SK-N-SH (cell line): ENCODE measurements at regions of chr7 and their contacts with region 1.

Region 1: DNA sequence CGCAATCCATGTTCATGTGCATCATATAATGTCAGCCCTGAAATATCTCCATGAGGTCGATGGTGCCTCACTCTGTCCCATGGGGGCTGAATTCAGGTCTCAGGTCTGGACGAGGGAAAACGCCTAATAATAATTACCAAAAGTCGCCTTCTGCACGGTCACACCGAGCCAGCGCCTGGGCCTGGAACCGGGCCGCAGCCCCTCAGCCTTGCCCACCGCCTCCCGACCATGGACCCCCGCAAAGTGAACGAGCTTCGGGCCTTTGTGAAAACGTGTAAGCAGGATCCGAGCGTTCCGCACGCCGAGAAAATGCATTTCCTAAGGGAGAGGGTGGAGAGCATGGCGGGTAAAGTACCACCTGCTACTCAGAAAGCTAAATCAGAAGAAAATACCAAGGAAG is 18.8 kb upstream of the KLRG2 start:
- DNase-seq: no peak
- H3K4me3 ChIP-seq: no peak overlapping the region
- H3K27ac ChIP-seq: no peak overlapping the region
- H3K4me1 ChIP-seq: no peaks in the 10 kb centered on the region
- H3K27me3 ChIP-seq: no peaks in the 10 kb centered on the region
- CTCF ChIP-seq: no peak
- EP300 ChIP-seq: no peak
- RAD21 ChIP-seq: no peak

Region 2: GRCh38 chr7:139382439-139382838 is 119.8 kb before region 1 on chr7:
- CTCF ChIA-PET with region 1: no interaction called
- POLR2A ChIA-PET with region 1: no interaction called
- DNase-seq: no peak
- H3K4me3 ChIP-seq: no peak overlapping the region
- H3K27ac ChIP-seq: no peak overlapping the region
- H3K4me1 ChIP-seq: no peaks in the 10 kb centered on the region
- H3K27me3 ChIP-seq: no peaks in the 10 kb centered on the region
- CTCF ChIP-seq: no peak
- EP300 ChIP-seq: no peak
- RAD21 ChIP-seq: no peak

Region 3: DNA sequence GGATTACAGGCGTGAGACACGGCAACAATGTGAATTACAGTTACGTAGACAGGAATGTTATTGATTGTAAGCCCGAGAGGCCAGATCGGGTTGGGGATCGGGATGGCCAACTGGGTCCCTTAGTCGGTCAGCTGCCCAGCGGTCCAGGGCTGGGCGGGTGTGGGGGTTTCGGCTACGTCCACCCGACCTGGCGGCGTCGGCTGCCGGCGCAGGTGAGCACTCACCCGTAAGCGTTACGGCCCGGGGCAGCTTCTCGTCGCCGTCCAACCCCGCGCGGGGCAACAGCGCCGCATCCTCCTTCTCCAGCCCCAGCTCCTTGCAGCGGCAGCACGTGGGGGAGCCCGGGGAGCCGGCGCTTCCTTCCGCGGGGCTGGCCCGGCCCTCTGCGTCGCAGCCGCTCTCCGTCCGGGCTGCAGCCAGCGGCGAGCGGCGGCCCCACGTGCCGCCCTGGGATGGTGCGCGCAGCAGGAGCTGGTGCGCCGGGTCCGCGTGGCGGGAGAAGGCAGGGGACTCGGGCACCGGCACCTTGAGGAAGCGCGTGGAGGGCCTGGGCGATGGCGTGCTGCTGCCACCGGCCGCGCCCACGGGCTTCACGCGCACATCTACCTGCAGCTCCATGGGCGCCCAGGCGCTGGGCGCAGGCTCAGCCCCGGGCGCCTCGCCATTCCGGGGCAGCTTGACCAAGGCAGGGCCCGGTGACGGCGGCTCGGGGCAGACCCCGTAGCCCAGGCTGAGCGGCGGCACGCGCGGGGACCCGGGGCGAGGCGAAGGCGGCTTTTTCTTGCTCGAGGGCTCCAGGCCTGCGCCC is 19.4 kb before region 1 on chr7:
- CTCF ChIA-PET with region 1: interaction called, 25 read pairs
- POLR2A ChIA-PET with region 1: no interaction called
- DNase-seq: peak; percentile 89
- H3K4me3 ChIP-seq: peak overlapping the region; percentile 30 to 41
- H3K27ac ChIP-seq: no peak overlapping the region
- H3K4me1 ChIP-seq: peaks cover 0 to 21% of the 10 kb centered on the region in 2 experiments; a peak in 1 of 4 replicates
- H3K27me3 ChIP-seq: peaks cover 61% of the 10 kb centered on the region
- CTCF ChIP-seq: no peak
- EP300 ChIP-seq: no peak
- RAD21 ChIP-seq: no peak

Region 4: GRCh38 chr7:139557857-139558581 is 55.8 kb after region 1 on chr7:
- CTCF ChIA-PET with region 1: interaction called, 22 read pairs
- POLR2A ChIA-PET with region 1: no interaction called
- DNase-seq: no peak
- H3K4me3 ChIP-seq: no peak overlapping the region
- H3K27ac ChIP-seq: no peak overlapping the region
- H3K4me1 ChIP-seq: no peaks in the 10 kb centered on the region
- H3K27me3 ChIP-seq: no peaks in the 10 kb centered on the region
- CTCF ChIP-seq: no peak
- EP300 ChIP-seq: no peak
- RAD21 ChIP-seq: no peak

Region 5: GRCh38 chr7:139602143-139602722 is 100.0 kb after region 1 on chr7:
- CTCF ChIA-PET with region 1: interaction called, 21 read pairs
- POLR2A ChIA-PET with region 1: no interaction called
- DNase-seq: peak; percentile 65
- H3K4me3 ChIP-seq: no peak overlapping the region
- H3K27ac ChIP-seq: no peak overlapping the region
- H3K4me1 ChIP-seq: peaks cover 0 to 18% of the 10 kb centered on the region in 2 experiments; a peak in 1 of 4 replicates
- H3K27me3 ChIP-seq: no peaks in the 10 kb centered on the region
- CTCF ChIP-seq: peak; percentile 86
- EP300 ChIP-seq: no peak
- RAD21 ChIP-seq: peak; percentile 76

Region 6: GRCh38 chr7:139635526-139636302 is 133.5 kb after region 1 on chr7:
- CTCF ChIA-PET with region 1: interaction called, 10 read pairs
- POLR2A ChIA-PET with region 1: no interaction called
- DNase-seq: no peak
- H3K4me3 ChIP-seq: no peak overlapping the region
- H3K27ac ChIP-seq: no peak overlapping the region
- H3K4me1 ChIP-seq: no peaks in the 10 kb centered on the region
- H3K27me3 ChIP-seq: no peaks in the 10 kb centered on the region
- CTCF ChIP-seq: no peak
- EP300 ChIP-seq: no peak
- RAD21 ChIP-seq: no peak